Dorsolateral prefrontal cortex (tissue), 120 donors: ENCODE measurements at regions of chr5 and their contacts with region 1.

Region 1: GRCh38 chr5:136559651-136560050 is 194.3 kb upstream of the TRPC7 start:
- DNase-seq: no peak
- H3K4me3 ChIP-seq: no peak overlapping the region
- H3K27ac ChIP-seq: no peak overlapping the region
- H3K27me3 ChIP-seq: peaks cover 0 to 17% (median 0%) of the 10 kb centered on the region in 45 donors
- CTCF ChIP-seq: no peak

Region 2: GRCh38 chr5:136108180-136108611 is 451.5 kb before region 1 on chr5:
- intact Hi-C with region 1: no loop called
- DNase-seq: no peak
- H3K4me3 ChIP-seq: no peak overlapping the region
- H3K27ac ChIP-seq: no peak overlapping the region
- H3K27me3 ChIP-seq: peaks cover 0 to 3% (median 0%) of the 10 kb centered on the region in 45 donors
- CTCF ChIP-seq: no peak

Region 3: DNA sequence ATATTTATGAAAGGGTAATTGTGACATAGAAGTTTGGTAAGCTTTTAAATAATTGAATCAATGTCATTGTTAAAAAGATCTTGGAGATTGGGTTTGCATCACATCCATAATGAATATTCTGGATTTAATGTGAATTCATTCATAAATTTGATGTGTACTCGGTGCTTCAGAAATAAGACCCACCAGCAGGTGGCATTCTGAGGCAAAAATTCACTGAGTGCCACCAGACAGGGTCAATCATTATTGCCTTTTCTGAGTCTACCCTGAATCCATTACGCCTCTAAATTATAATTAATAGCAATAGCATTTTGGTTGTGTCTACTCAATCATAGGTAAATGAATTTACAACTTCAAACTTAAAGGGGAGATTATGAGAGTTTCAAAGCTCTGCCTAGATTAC is 195.3 kb before region 1 on chr5:
- intact Hi-C with region 1: loop called in 1 of 2 experiments (anchors 5 kb)
- DNase-seq: peak in 1 of 10 donors; percentile 15
- H3K4me3 ChIP-seq: no peak overlapping the region
- H3K27ac ChIP-seq: no peak overlapping the region
- H3K27me3 ChIP-seq: peaks cover 0 to 38% (median 10%) of the 10 kb centered on the region in 45 donors
- CTCF ChIP-seq: peak in 52 of 56 donors; percentile 23 to 66 (median 48)